ENCODE measurements at regions of chr20 and their contacts with region 1.

Region 1: GRCh38 chr20:3172743-3173609 is at the start of gene LZTS3:
- DNase-seq: peak; percentile 62 to 84
- ATAC-seq: peak; percentile 51 to 58
- H3K4me3 ChIP-seq: peak within 1 kb of the TSS; percentile 91
- H3K27ac ChIP-seq: peak within 1 kb of the TSS; percentile 86 to 91
- H3K4me1 ChIP-seq: peaks cover 15% of the 10 kb centered on the region
- CTCF ChIP-seq: peak; percentile 33; the same call in 2 of the 3 replicates
- EP300 ChIP-seq: no peak
- POLR2A ChIP-seq: no peak; the same call in 1 of the 2 replicates
- RAD21 ChIP-seq: no peak
- polyA plus RNA-seq, gene LZTS3: 3.8 and 5.3 TPM in 2 replicates

Region 2: DNA sequence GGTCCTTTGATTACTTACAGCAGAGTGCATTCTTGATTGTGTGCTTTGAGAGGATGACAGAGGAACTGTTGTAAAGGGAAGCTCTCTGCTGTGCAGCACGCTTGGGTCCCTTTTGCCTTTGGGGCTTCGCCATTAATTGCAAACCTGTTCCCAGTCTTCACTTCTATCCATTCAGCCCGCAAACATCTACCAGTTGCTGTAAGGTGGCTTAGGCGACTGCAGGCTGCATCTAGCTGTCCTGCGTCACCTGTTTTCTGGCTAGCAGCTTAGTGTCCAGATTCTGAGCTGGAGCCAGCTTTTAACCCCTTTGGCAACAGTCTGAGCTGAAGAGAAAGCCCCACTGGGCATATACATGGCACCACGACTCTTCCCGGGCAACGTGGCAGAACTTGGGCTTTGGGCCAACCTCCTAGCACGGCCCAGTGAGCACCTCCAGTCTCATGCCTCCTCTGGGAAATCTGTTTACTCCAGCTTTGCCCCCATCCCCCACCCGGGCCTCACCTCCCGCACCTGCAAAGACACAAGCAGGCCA is 10.8 kb before region 1 on chr20:
- CTCF ChIA-PET with region 1: interaction called, 17 read pairs
- POLR2A ChIA-PET with region 1: interaction called, 6 read pairs
- DNase-seq: no peak
- ATAC-seq: no peak
- H3K4me3 ChIP-seq: no peak overlapping the region
- H3K27ac ChIP-seq: no peak overlapping the region
- H3K4me1 ChIP-seq: peaks cover 16% of the 10 kb centered on the region; the same call in 2 of the 3 replicates
- CTCF ChIP-seq: no peak
- EP300 ChIP-seq: no peak
- POLR2A ChIP-seq: no peak
- RAD21 ChIP-seq: no peak

Measured in A549 (cell line).